ENCODE measurements at regions of chr20 and their contacts with region 1.

Region 1: DNA sequence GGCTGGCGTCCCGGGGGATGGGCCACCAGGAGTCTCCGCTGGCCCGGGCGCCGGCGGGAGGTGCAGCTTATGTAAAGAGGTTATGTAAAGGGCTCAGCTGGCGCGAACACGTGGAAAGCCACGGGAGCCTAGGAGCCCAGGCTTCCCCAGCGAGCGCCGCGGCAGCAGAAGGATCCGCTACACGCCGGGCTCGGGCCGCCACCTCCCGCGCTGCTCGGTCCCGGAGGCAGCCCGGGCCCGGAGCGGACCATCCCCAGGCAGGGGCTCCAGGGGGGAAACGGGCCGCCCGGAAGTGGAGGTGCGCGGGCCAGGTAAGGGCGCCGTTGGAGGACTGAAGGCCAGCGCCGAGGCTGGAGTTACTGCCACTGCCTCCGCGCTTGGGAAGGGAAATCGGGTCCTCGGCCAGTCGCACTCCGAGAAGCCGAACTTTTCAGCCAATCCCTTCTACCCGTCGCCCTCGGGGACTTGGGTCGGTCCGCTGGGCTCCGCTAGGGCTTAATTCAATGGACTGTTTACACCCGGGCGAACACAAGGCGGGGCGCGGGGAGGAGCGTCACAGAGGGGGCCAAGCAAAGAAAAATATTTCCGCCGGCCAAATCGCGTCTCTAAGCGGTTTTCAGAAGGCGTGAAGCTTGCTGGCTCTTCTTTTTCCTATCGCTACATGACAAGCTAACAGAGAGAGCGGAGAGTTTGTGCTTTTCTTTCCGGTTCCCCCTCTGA is 398 bp downstream of the STK35 start:
- DNase-seq: peak; percentile 93
- ATAC-seq: peak; percentile 83
- H3K4me3 Mint-ChIP-seq: peak overlapping the region; percentile 81
- H3K27ac Mint-ChIP-seq: peak overlapping the region; percentile 100
- H3K4me1 Mint-ChIP-seq: peaks cover 37% of the 10 kb centered on the region
- H3K27me3 Mint-ChIP-seq: no peaks in the 10 kb centered on the region

Region 2: DNA sequence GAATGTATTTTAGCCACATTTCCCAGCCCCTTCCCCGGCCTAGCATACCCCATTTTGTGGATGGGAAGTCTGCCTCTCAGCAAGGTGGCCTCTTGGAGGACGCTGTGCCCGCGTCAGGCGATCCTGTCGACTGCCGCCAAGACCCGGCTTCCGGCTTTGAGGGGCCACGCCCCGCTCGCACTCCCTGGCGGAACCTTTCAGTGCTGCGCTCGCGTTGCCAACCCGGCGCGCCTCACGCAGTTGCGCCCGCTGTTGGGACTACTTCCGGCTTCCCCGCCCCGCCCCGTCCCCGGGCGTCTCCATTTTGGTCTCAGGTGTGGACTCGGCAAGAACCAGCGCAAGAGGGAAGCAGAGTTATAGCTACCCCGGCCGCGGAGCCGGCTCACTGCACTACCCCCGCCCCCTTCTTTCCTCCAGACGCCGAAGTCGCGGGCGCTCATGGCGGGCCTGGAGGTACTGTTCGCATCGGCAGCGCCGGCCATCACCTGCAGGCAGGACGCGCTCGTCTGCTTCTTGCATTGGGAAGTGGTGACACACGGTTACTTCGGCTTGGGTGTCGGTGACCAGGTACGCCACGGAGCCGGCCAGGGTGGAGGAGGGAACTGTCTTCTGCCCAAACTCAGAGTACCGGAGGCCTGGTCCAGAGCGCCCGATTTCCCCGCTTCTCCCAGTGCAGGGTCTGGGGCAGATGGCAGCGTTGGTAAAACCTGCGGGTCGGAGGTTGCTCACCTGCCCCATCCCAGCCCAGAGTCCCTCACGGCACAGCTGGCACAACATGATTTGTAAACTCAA is 983.5 kb before region 1 on chr20 and contains the start of gene PSMF1:
- CTCF ChIA-PET with region 1: no interaction called
- POLR2A ChIA-PET with region 1: no interaction called
- intact Hi-C with region 1: loop called in 1 of 2 experiments (anchors 1 kb)
- DNase-seq: peak; percentile 97
- ATAC-seq: peak; percentile 97
- H3K4me3 Mint-ChIP-seq: peak within 1 kb of the TSS; percentile 94
- H3K27ac Mint-ChIP-seq: peak within 1 kb of the TSS; percentile 93
- H3K4me1 Mint-ChIP-seq: peaks cover 49% of the 10 kb centered on the region
- H3K27me3 Mint-ChIP-seq: no peaks in the 10 kb centered on the region
- total RNA-seq, gene PSMF1: 143 to 178 TPM

Region 3: GRCh38 chr20:1392823-1393506 is 709.1 kb before region 1 on chr20 and contains the start of gene FKBP1A:
- CTCF ChIA-PET with region 1: no interaction called
- POLR2A ChIA-PET with region 1: no interaction called
- intact Hi-C with region 1: loop called in 1 of 2 experiments (anchors 1 kb)
- DNase-seq: peak; percentile 95
- ATAC-seq: peak; percentile 82
- H3K4me3 Mint-ChIP-seq: peak within 1 kb of the TSS; percentile 93
- H3K27ac Mint-ChIP-seq: peak within 1 kb of the TSS; percentile 94
- H3K4me1 Mint-ChIP-seq: peaks cover 56% of the 10 kb centered on the region
- H3K27me3 Mint-ChIP-seq: no peaks in the 10 kb centered on the region
- total RNA-seq, gene FKBP1A: 265 to 316 TPM

Region 4: GRCh38 chr20:1965520-1966351 is 136.3 kb before region 1 on chr20:
- CTCF ChIA-PET with region 1: interaction called, 4 read pairs
- POLR2A ChIA-PET with region 1: no interaction called
- intact Hi-C with region 1: loop called in 1 of 2 experiments (anchors 2 kb)
- DNase-seq: peak; percentile 93
- ATAC-seq: peak; percentile 93
- H3K4me3 Mint-ChIP-seq: peak overlapping the region; percentile 34
- H3K27ac Mint-ChIP-seq: no peak overlapping the region
- H3K4me1 Mint-ChIP-seq: peaks cover 11% of the 10 kb centered on the region
- H3K27me3 Mint-ChIP-seq: peaks cover 20% of the 10 kb centered on the region

Region 5: GRCh38 chr20:2206957-2207769 is 105.1 kb after region 1 on chr20:
- CTCF ChIA-PET with region 1: no interaction called
- POLR2A ChIA-PET with region 1: no interaction called
- intact Hi-C with region 1: loop called in 1 of 2 experiments (anchors 1 kb)
- DNase-seq: peak; percentile 85
- ATAC-seq: peak; percentile 77
- H3K4me3 Mint-ChIP-seq: peak overlapping the region; percentile 67
- H3K27ac Mint-ChIP-seq: peak overlapping the region; percentile 24
- H3K4me1 Mint-ChIP-seq: peaks cover 9% of the 10 kb centered on the region
- H3K27me3 Mint-ChIP-seq: no peaks in the 10 kb centered on the region

Region 6: DNA sequence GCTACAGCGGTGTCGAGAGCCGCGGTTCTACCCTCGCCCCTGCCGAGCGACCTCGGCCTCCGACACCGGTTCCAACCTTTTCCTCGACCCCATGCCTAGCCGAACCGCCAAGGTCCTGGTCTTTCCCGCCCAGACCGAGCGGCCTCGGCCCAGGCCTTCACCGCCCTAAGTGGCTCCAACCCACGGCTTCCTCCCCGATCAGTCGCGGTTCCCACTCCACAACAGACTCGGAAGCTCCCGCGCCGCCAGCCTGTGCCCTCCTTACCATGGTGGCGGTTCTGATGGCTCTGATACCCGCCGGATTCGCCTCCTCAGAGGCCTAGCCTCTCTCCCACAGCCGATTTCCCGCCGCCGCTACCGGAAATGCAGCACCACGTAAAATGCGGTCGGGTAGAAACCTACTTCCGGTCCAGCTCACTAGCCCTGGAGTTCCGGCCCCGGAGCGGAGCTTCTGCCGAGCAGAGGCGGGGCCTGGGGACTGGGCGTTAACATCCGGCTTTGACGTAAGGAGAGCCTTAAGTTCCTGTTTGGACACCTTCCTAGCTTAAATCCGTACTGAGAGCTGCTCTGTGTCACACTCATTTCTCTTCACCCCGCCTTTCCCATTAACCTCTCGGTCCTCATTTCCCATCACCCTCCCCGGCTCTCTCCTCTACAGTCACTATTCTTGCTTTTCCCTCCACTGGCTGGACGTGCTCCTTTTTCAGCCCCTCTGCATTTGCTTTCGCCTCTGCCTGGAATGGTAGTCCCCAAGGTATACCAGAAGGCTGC is 368.6 kb after region 1 on chr20 and contains the start of gene SNRPB:
- CTCF ChIA-PET with region 1: no interaction called
- POLR2A ChIA-PET with region 1: no interaction called
- intact Hi-C with region 1: loop called in 1 of 2 experiments (anchors 1 kb)
- DNase-seq: peak; percentile 98
- ATAC-seq: peak; percentile 99
- H3K4me3 Mint-ChIP-seq: peak within 1 kb of the TSS; percentile 96
- H3K27ac Mint-ChIP-seq: peak within 1 kb of the TSS; percentile 100
- H3K4me1 Mint-ChIP-seq: peaks cover 49% of the 10 kb centered on the region
- H3K27me3 Mint-ChIP-seq: no peaks in the 10 kb centered on the region
- total RNA-seq, gene SNRPB: 348 to 466 TPM

Region 7: DNA sequence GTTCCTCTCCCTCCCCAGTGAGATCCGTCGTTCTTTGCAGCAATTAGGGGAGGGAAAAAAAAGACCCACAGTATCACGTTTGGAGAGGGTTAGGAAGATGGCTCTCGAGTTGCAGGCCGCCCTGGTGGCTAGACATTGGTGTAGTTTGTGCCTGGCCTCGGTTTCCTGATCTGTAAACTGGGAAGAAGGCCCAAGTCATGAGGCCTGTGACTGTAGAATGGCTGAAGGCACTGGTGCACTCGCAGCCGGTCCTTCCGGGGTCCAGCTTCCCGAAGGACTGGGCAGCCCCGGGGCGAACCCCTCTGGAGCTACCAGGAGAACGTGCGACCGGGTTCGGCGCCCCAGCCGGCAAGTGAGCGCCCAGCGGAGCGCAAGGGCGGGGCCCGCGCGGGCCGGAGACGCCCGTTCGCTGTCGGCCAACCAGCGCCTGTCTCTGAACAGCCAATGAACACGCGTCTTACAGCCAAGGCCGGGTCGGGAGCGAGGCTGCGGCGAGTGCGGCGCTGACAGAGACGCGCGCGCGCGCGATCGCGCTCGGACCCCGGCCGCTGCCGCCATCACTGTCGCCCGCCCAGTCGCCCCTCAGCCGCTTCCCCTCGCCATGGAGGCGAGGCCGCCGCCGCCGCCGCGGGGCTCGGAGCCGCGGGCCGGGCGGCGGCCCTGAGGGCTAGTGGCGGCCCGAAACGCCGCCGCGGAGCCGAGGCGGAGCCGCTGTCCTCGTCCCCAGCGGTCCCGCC is 771.2 kb after region 1 on chr20 and contains the start of gene PTPRA:
- CTCF ChIA-PET with region 1: no interaction called
- POLR2A ChIA-PET with region 1: no interaction called
- intact Hi-C with region 1: loop called in 1 of 2 experiments (anchors 1 kb)
- DNase-seq: peak; percentile 96
- ATAC-seq: peak; percentile 91
- H3K4me3 Mint-ChIP-seq: peak within 1 kb of the TSS; percentile 84
- H3K27ac Mint-ChIP-seq: peak within 1 kb of the TSS; percentile 95
- H3K4me1 Mint-ChIP-seq: peaks cover 44% of the 10 kb centered on the region
- H3K27me3 Mint-ChIP-seq: no peaks in the 10 kb centered on the region
- total RNA-seq, gene PTPRA: 58.5 to 86.3 TPM

Region 8: GRCh38 chr20:3239026-3239866 is 1137.2 kb after region 1 on chr20 and contains the start of gene SLC4A11:
- CTCF ChIA-PET with region 1: no interaction called
- POLR2A ChIA-PET with region 1: no interaction called
- intact Hi-C with region 1: no loop called
- DNase-seq: peak; percentile 63
- ATAC-seq: peak; percentile 68
- H3K4me3 Mint-ChIP-seq: peak within 1 kb of the TSS; percentile 77
- H3K27ac Mint-ChIP-seq: no peak within 1 kb of the TSS
- H3K4me1 Mint-ChIP-seq: peaks cover 7% of the 10 kb centered on the region
- H3K27me3 Mint-ChIP-seq: peaks cover 48% of the 10 kb centered on the region
- total RNA-seq, gene SLC4A11: 0.60 to 0.66 TPM

Measured in activated CD4-positive, alpha-beta T cell treated with anti-CD3 and anti-CD28 coated beads for 36 hours (primary cell).